AG04450 (cell line): ENCODE measurements at regions of chr6 and their contacts with region 1.

Region 1: GRCh38 chr6:113340371-113340770 is 516.8 kb upstream of the MARCKS start:
- DNase-seq: no peak
- H3K4me3 ChIP-seq: no peak overlapping the region
- H3K27ac ChIP-seq: no peak overlapping the region
- H3K27me3 ChIP-seq: no peaks in the 10 kb centered on the region
- CTCF ChIP-seq: no peak

Region 2: DNA sequence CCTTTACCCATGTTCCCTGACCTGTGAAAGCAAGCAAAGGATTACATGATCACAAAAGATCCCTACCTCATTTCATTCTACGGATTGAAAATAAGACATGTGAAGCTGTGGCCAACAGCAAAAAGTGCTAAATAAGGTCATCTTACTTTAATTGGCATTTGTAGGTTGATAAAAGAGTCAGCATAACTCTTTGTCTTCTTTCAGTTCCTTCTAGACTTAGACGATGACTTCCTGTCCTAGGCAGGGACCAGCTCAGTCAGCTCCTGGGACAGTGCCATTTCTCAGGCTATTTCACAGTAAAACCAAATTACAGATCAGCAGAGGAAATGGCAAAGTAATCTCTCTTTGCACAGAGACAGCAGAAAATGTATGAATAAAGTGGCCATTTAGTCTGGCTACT is 512.6 kb before region 1 on chr6:
- CTCF ChIA-PET with region 1: no interaction called
- POLR2A ChIA-PET with region 1: no interaction called
- DNase-seq: no peak
- H3K4me3 ChIP-seq: no peak overlapping the region
- H3K27ac ChIP-seq: no peak overlapping the region
- H3K27me3 ChIP-seq: no peaks in the 10 kb centered on the region
- CTCF ChIP-seq: no peak

Region 3: GRCh38 chr6:113352029-113352801 is 11.8 kb after region 1 on chr6:
- CTCF ChIA-PET with region 1: no interaction called
- POLR2A ChIA-PET with region 1: no interaction called
- DNase-seq: no peak
- H3K4me3 ChIP-seq: no peak overlapping the region; the same call in 1 of the 2 replicates
- H3K27ac ChIP-seq: peak overlapping the region; percentile 85
- H3K27me3 ChIP-seq: no peaks in the 10 kb centered on the region
- CTCF ChIP-seq: no peak

Region 4: GRCh38 chr6:113381959-113382358 is 41.6 kb after region 1 on chr6:
- CTCF ChIA-PET with region 1: no interaction called
- POLR2A ChIA-PET with region 1: interaction called, 11 read pairs
- DNase-seq: no peak
- H3K4me3 ChIP-seq: no peak overlapping the region
- H3K27ac ChIP-seq: no peak overlapping the region
- H3K27me3 ChIP-seq: no peaks in the 10 kb centered on the region
- CTCF ChIP-seq: no peak